Lower leg skin (tissue), 4 donors: ENCODE measurements at regions of chr13 and their contacts with region 1.

Region 1: DNA sequence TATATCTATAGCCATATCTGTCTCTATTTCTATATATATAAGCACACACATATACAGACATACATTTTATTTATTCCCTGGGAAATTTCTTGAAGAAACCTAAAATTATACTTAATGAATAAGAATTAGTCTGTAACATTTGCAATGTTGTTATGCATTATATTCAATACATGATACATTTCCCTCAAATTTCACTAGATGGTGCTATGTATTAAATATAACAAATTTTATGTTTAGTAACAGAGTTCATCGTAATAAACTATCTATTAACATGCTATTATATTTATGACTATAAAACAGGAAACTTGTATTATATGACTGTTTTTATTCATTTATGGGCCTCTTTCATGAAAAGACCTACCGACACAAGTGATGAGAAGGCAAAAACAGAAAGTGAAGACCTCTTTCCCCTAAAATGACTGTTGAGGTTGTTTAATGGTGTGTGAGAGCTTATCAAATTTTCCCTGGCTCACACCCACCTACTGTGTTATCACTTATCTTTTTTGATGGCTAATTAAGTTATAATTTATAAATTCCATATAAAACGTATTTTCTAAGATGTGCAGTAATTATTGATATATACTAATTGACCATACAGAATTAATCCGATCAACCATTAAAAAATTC is 881.9 kb downstream of the SLITRK6 start:
- DNase-seq: no peak
- H3K4me3 ChIP-seq: no peak overlapping the region
- CTCF ChIP-seq: no peak
- POLR2A ChIP-seq: no peak

Region 2: GRCh38 chr13:84870199-84870598 is 47.2 kb before region 1 on chr13:
- intact Hi-C with region 1: no loop called
- DNase-seq: no peak
- H3K4me3 ChIP-seq: no peak overlapping the region
- CTCF ChIP-seq: no peak
- POLR2A ChIP-seq: no peak

Region 3: DNA sequence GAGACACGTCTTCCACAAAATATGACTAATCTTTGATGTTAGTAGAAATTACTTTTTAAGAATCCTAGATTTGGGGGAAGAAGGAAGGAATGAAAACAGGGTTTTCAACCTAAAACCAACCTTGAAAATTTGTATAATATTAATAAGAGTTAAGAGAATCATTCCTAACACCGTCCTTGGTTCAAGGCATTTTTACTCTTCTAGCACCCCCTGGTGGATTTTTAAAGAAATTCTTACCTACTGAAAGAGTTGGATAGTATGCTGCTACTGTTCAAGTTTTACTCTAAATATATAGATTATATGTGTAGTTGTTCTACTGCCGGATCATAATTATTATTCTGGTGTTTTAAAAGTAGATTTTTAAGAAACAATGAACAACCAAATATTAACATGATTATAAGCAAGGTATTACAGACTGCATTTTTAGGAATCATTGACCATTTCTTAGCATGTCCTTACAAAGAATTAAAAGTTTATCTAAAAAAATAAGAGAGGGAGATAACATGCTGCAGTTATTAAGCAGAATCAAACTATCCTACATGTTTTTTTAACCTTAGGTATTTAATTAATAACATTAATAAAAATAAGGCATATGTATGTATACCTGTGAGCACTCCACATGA is 889.3 kb after region 1 on chr13:
- intact Hi-C with region 1: loop called (anchors 5 kb)
- DNase-seq: no peak
- H3K4me3 ChIP-seq: no peak overlapping the region
- CTCF ChIP-seq: no peak
- POLR2A ChIP-seq: no peak